ENCODE measurements at regions of chr19 and their contacts with region 1.

Region 1: GRCh38 chr19:49363268-49364082 is at the start of gene DKKL1:
- DNase-seq: peak; percentile 99 to 100
- ATAC-seq: peak; percentile 84 to 95 (median 91)
- H3K4me3 ChIP-seq: peak within 1 kb of the TSS; percentile 65 to 97 (median 82)
- H3K27ac ChIP-seq: peak within 1 kb of the TSS; percentile 91 to 99 (median 96)
- H3K4me1 ChIP-seq: peaks cover 0 to 25% (median 11%) of the 10 kb centered on the region in 9 donors
- H3K27me3 ChIP-seq: peaks cover 0 to 31% (median 0%) of the 10 kb centered on the region in 7 donors
- CTCF ChIP-seq: peak in 4 of 9 donors; percentile 29 to 53 (median 40)
- total RNA-seq, gene DKKL1: 0.22 to 0.54 (median 0.26) TPM in 3 of 10 donors, not detected in the others

Region 2: DNA sequence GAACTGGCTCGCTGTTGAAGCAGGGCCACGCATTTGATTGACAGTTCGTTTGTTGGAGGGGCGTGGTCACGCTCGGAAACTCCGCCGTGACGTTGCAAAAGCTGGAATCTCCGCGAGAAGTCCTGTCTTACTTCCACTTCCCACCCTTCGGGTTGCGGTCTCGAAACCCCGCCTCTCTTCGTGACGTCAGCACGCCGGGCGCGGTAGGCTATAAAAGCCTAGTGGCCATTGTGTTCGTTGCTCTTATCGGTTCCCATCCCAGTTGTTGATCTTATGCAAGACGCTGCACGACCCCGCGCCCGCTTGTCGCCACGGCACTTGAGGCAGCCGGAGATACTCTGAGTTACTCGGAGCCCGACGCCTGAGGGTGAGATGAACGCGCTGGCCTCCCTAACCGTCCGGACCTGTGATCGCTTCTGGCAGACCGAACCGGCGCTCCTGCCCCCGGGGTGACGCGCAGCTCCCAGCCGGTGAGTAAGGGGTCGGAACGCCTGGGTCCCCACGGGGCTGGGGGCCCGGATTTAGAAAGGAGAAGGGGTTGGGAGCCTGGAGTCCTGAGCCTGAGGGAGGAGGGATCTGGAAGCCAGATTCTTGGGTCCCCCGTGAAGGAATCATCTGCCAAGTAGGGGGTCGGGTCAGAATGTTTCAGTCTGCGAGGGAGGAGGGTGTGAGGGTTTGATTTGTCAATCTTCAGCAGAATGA is 491.1 kb before region 1 on chr19 and contains the start of gene PPP1R15A:
- intact Hi-C with region 1: loop called in 1 of 10 experiments (anchors 5 kb)
- DNase-seq: peak; percentile 98
- ATAC-seq: peak; percentile 59 to 88 (median 78)
- H3K4me3 ChIP-seq: peak within 1 kb of the TSS; percentile 69 to 100 (median 92)
- H3K27ac ChIP-seq: peak within 1 kb of the TSS; percentile 96 to 100 (median 100)
- H3K4me1 ChIP-seq: peaks cover 7 to 62% (median 53%) of the 10 kb centered on the region in 9 donors
- H3K27me3 ChIP-seq: no peaks in the 10 kb centered on the region
- CTCF ChIP-seq: peak in 2 of 9 donors; percentile 10 to 19
- total RNA-seq, gene PPP1R15A: 55.4 to 123 (median 73.7) TPM

Region 3: DNA sequence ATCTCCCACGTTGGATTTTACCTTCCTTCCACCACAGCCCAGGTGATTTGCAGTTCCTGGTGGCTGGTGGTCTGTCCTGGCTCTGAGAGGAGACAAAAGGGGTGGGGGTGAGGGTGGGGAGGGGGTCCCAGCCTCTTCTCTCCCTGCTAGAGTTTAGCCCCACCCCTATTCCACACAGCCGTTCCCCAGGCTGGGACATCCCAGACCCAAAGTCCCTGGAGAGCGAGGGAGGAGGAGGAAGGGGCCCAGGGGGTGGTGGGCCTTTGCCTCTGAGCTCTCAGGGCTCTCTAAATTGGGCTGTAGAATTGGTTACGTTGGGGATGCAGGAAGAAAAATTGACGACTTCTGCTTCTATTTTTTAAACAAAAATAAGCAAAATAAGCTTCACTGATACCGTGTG is 120.3 kb before region 1 on chr19:
- intact Hi-C with region 1: no loop called
- DNase-seq: no peak
- ATAC-seq: no peak
- H3K4me3 ChIP-seq: no peak overlapping the region
- H3K27ac ChIP-seq: no peak overlapping the region
- H3K4me1 ChIP-seq: no peaks in the 10 kb centered on the region
- H3K27me3 ChIP-seq: no peaks in the 10 kb centered on the region
- CTCF ChIP-seq: no peak

Region 4: DNA sequence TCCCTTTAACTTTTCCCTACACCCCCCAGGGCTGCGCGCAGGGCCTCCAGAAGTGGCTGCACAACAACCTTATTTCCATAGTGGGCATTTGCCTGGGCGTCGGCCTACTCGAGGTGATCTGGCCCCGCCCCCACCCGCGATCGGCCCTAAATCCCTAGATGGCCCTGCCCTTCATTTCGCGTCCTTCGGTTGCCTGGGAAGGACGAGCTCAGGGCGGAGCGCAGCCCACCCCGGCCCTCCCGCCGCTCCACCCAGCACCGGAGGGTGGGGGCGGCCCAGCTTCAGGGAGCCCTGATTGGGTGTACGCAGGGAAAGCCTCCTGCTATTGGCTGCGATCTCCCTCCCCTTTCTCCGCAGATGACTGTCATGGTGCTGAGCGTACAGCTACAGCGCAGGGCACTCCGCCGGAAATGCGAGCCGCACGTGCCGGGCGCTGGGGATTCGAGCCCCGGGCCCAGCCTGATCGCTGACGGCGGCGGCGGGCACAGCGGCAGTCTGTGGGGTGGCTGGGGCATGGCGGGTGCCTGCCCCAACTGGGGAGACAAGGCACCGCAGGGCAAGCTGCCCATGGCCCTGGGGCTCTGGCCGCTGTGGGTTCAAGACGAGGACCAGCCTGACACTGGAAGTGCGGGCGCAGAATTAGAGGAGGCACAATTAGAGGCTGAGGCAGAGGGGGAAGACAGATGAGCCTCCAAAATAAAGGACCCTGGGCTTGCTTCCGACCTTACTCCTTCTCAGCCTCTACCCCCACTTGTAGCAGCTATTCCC is 24.0 kb before region 1 on chr19:
- intact Hi-C with region 1: loop called in 1 of 10 experiments (anchors 2 kb)
- DNase-seq: peak; percentile 88 to 91
- ATAC-seq: peak; percentile 94 to 97 (median 96)
- H3K4me3 ChIP-seq: peak overlapping the region in 9 of 10 donors; percentile 27 to 63 (median 45)
- H3K27ac ChIP-seq: peak overlapping the region; percentile 0 to 88 (median 80)
- H3K4me1 ChIP-seq: peaks cover 2 to 45% (median 27%) of the 10 kb centered on the region in 9 donors
- H3K27me3 ChIP-seq: no peaks in the 10 kb centered on the region
- CTCF ChIP-seq: no peak

Region 5: GRCh38 chr19:49443366-49444099 is 80.1 kb after region 1 on chr19:
- intact Hi-C with region 1: loop called in 1 of 10 experiments (anchors 2 kb)
- DNase-seq: peak; percentile 94 to 96
- ATAC-seq: peak; percentile 86 to 95 (median 93)
- H3K4me3 ChIP-seq: peak overlapping the region; percentile 60 to 93 (median 69)
- H3K27ac ChIP-seq: peak overlapping the region; percentile 55 to 92 (median 86)
- H3K4me1 ChIP-seq: peaks cover 0 to 23% (median 6%) of the 10 kb centered on the region in 9 donors
- H3K27me3 ChIP-seq: peaks cover 8 to 40% (median 36%) of the 10 kb centered on the region in 7 donors
- CTCF ChIP-seq: peak; percentile 65 to 89 (median 80)

Measured in heart right ventricle (tissue), 16 donors.